Sciatic nerve (tissue), 2 donors: ENCODE measurements at regions of chr3 and their contacts with region 1.

Region 1: GRCh38 chr3:61561374-61562041 is at the start of gene PTPRG:
- DNase-seq: peak; percentile 90
- ATAC-seq: peak; percentile 83
- total RNA-seq, gene PTPRG: 67.7 TPM

Region 2: DNA sequence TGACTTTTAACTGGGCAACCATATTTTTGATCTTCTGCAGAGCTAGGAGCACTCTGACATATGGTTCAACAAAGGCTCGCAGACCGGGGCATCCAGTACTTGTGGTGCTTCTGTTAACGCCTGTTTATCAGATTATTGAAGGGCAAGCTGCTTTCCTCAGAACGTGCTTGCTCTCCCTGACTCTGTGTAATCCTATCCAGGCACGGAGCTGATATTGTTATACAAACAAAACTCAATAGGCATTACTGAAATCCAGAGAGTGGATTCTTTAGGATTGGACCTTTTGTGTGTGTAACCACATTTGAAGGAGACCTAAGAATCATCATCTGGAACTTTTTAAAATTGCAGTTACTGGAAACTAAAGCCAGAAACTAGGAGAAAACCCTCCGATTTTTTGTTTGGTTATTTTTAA is 246.4 kb after region 1 on chr3:
- intact Hi-C with region 1: loop called (anchors 10 kb)
- DNase-seq: no peak
- ATAC-seq: peak; percentile 43